ENCODE measurements at regions of chr15 and their contacts with region 1.

Region 1: GRCh38 chr15:90851940-90852339 is 16.4 kb upstream of the FURIN start:
- DNase-seq: no peak
- H3K4me3 Mint-ChIP-seq: peak overlapping the region; percentile 63
- H3K27ac Mint-ChIP-seq: peak overlapping the region; percentile 96
- H3K4me1 Mint-ChIP-seq: peaks cover 67% of the 10 kb centered on the region
- H3K27me3 Mint-ChIP-seq: peaks cover 1% of the 10 kb centered on the region

Region 2: DNA sequence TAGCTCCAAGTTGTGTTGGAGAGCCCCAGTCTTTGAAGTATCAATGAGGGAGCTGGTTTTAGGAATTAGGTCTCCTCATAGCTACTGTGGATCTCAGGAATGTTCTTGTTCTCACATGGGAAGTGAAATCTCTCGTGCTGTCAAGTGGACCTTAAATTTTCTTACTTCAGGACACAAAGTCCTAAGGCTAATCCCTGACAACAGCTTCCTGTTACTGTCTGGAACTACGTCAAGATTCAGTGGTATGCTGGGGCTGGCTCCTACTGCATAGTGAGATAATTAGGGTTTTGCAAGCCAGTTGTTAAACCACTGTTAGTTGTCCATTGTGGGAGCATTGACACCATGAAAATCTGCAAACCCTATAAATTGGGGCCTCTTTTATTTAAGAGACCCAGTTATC is 1123.7 kb before region 1 on chr15:
- intact Hi-C with region 1: no loop called
- DNase-seq: no peak
- H3K4me3 Mint-ChIP-seq: no peak overlapping the region
- H3K27ac Mint-ChIP-seq: no peak overlapping the region
- H3K4me1 Mint-ChIP-seq: no peaks in the 10 kb centered on the region
- H3K27me3 Mint-ChIP-seq: peaks cover 9% of the 10 kb centered on the region

Region 3: DNA sequence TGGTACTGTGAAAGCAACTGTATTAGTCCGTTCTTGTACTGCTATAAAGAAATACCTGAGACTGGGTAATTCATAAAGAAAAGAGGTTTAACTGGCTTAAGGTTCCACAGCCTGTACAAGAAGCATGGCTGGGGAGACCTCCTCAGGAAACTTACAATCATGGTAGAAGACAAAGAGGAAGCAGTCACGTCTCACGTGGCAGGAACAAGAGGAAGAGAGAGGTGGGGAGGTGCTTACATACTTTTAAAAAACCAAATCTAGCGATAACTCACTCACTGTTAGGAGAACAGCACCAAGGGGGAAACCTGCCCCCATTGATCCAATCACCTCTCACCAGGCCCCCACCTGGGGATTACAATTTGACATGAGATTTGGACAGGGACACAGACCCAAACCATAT is 415.0 kb before region 1 on chr15:
- intact Hi-C with region 1: no loop called
- DNase-seq: no peak
- H3K4me3 Mint-ChIP-seq: no peak overlapping the region
- H3K27ac Mint-ChIP-seq: no peak overlapping the region
- H3K4me1 Mint-ChIP-seq: peaks cover 30% of the 10 kb centered on the region
- H3K27me3 Mint-ChIP-seq: no peaks in the 10 kb centered on the region

Region 4: DNA sequence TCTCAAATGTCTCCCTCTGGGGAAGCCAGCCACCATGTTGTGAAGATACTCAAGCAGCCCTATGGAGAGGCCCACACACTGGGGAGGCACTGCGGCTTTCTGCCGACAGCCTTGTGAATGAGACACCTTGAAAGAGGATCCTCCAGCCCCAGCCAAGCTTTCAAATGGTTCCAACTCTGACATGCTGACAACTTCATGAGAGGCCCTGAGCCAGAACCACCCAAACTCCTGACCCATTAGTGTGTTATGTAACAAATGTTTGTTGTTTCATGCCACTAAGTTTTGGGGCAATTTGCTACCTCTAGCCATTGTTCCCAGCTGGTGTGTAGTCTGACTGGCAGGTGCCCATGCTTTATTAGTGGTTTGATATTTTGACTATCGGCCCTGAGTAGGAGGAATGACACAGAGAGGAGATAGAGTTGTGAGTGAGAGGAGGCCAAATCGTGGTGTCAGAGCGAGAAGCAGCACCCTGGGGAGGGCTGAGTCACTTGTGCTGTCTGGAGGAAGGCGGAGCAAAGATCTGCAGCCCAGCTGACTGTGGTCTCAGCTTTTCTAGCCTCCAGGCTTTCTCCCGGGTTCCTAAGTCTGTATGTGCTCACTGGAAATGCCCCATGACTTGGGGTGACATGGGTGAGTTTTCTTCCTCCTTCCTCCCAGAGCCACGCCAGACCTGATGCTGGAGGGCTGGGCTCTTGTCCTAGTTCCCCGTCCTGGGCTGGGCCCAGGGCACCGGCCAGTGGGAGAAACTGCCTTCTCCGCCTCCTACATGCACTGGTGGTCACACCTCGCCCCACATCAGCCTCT is 191.5 kb before region 1 on chr15:
- intact Hi-C with region 1: loop called (anchors 2 kb)
- DNase-seq: peak; percentile 71
- H3K4me3 Mint-ChIP-seq: peak overlapping the region; percentile 77
- H3K27ac Mint-ChIP-seq: peak overlapping the region; percentile 96
- H3K4me1 Mint-ChIP-seq: peaks cover 81% of the 10 kb centered on the region
- H3K27me3 Mint-ChIP-seq: peaks cover 1% of the 10 kb centered on the region

Region 5: DNA sequence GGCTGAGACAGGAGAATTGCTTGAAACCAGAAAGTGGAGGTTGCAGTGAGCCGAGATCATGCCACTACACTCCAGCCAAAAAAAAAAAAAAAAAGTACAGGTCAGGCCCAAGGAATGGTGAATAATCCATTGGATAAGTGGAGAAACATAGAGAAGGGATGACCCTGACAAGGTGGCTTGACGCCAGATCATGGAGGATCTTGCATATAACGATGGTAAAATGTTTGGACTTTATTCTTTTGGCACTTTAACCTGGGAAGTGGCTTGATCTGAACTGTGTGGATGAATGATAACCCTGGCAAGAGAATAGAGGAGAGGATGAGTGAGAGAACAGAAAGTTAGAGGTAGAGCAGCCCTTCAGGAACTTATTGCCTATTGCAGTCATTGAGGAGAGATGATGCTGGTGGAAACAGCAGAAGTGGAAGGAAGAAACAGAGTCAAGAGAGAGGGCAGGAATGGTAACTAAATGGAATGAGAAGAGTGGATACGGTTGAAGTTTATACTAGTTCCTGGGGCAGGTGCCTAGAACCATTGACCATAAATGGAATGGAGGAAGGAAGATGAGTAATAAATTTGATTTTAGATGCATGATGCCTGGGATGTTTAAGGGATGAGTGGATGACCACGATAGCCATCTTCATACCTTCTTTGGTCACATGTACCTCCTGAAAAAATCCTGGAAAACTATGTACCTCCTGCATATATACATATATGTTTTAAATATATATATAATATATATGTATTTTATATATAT is 77.0 kb before region 1 on chr15:
- intact Hi-C with region 1: no loop called
- DNase-seq: no peak
- H3K4me3 Mint-ChIP-seq: no peak overlapping the region
- H3K27ac Mint-ChIP-seq: peak overlapping the region; percentile 54
- H3K4me1 Mint-ChIP-seq: peaks cover 24% of the 10 kb centered on the region
- H3K27me3 Mint-ChIP-seq: no peaks in the 10 kb centered on the region

Region 6: DNA sequence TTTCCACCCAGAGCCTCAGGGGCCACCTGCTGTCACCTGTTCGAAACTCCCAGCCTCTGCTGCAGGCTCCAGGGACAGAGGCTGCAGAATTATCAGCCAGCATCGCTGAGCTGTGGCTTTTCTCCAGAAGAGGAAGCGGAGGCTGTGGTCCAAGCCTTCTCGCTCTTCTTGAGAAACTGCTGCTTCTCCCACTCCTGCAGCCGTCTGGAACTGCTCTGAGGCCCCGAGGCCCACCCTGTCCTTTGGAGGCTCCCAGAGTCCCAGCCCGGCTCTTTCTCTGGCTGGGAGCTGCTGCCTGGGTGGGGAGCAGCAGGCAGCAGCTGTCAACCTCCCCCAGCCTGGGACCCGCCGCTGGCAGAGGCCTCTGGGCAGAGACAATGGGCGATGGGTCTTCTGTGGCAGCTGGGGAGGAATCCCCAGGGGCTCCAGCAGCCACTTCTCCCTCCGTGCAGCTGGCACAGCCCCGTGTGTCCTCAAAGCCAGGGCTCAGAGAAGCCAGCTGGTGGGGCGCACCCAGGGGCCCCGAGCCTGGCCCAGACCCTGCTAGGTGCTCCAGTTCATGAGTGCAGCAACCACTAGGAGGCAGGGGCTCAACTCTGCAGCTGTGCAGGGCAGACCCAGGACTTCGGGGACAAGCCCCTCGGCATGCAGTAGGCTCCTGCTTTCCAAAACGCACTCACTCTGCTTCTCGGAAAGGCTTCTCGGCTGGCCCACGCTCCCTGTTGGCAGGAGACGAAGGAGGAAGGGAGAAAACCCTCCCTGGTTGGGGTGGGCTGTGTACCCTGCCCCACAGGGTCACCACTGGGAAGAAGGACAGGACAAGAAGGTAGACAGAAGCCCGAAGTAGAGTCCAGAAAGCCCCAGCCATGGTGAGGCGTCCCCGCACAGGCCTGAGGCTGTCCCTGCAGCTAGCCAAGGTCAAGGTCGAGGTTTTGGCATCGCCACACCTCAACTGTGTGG is 33.4 kb before region 1 on chr15:
- intact Hi-C with region 1: loop called (anchors 1 kb)
- DNase-seq: peak; percentile 40
- H3K4me3 Mint-ChIP-seq: peak overlapping the region; percentile 74
- H3K27ac Mint-ChIP-seq: peak overlapping the region; percentile 99
- H3K4me1 Mint-ChIP-seq: peaks cover 82% of the 10 kb centered on the region
- H3K27me3 Mint-ChIP-seq: no peaks in the 10 kb centered on the region

Region 7: GRCh38 chr15:90829942-90830440 is 21.9 kb before region 1 on chr15:
- intact Hi-C with region 1: loop called (anchors 1 kb)
- DNase-seq: peak; percentile 82
- H3K4me3 Mint-ChIP-seq: peak overlapping the region; percentile 75
- H3K27ac Mint-ChIP-seq: peak overlapping the region; percentile 91
- H3K4me1 Mint-ChIP-seq: peaks cover 69% of the 10 kb centered on the region
- H3K27me3 Mint-ChIP-seq: no peaks in the 10 kb centered on the region

Region 8: GRCh38 chr15:90839187-90840071 is 12.5 kb before region 1 on chr15:
- intact Hi-C with region 1: loop called (anchors 1 kb)
- DNase-seq: no peak
- H3K4me3 Mint-ChIP-seq: peak overlapping the region; percentile 79
- H3K27ac Mint-ChIP-seq: peak overlapping the region; percentile 99
- H3K4me1 Mint-ChIP-seq: peaks cover 84% of the 10 kb centered on the region
- H3K27me3 Mint-ChIP-seq: no peaks in the 10 kb centered on the region

Region 9: GRCh38 chr15:90886041-90886614 is 34.2 kb after region 1 on chr15:
- intact Hi-C with region 1: loop called (anchors 1 kb)
- DNase-seq: peak; percentile 66
- H3K4me3 Mint-ChIP-seq: peak overlapping the region; percentile 51
- H3K27ac Mint-ChIP-seq: peak overlapping the region; percentile 87
- H3K4me1 Mint-ChIP-seq: peaks cover 50% of the 10 kb centered on the region
- H3K27me3 Mint-ChIP-seq: no peaks in the 10 kb centered on the region

Region 10: GRCh38 chr15:91142114-91142731 is 290.3 kb after region 1 on chr15:
- intact Hi-C with region 1: no loop called
- DNase-seq: no peak
- H3K4me3 Mint-ChIP-seq: no peak overlapping the region
- H3K27ac Mint-ChIP-seq: no peak overlapping the region
- H3K4me1 Mint-ChIP-seq: no peaks in the 10 kb centered on the region
- H3K27me3 Mint-ChIP-seq: peaks cover 22% of the 10 kb centered on the region

Measured in activated T-helper 1 cell treated with anti-CD3 and anti-CD28 coated beads, Interleukin-12 subunit alpha, Interleukin-12 subunit beta, Interleukin-2, Interleukin-4 antibody, amounts not matched to agents 30 ng/mL and 10 ng/mL and 1 ng/mL, durations not matched to agents 14 hours and 24 hours and 36 hours (primary cell).